Breast epithelium (tissue), 4 donors: ENCODE measurements at regions of chr12 and their contacts with region 1.

Region 1: DNA sequence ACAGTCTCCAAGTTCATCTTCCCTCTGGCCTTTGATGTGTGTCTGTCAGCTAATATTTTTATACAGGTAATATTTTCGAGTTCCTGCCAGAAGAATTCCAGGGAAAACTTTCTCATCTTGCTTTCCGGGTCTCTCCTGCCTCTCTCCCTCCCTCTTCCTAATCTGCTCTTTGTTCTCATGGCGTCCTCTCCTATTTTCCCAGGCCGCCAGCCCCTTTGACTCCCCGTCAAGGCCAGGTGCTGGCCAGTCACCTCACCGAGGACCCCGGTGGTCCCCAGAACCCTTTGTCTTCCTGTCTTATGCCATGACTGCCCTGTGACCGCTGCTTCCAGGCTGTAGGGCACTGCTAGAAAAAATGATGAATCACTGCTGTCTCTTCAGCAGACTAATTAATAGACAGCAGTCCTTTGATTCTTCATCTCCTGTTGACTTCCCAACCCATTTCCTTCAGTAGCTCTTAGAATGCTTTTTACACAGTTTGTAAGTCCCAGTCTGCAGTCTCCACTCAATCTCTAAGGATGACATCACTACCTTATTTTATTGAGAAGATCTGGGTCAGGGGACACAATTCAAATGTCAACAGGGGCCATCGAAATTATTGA is 40.7 kb downstream of the PPFIBP1 start:
- DNase-seq: no peak
- H3K4me3 ChIP-seq: peak overlapping the region in 1 of 3 donors; percentile 16
- H3K27ac ChIP-seq: peak overlapping the region; percentile 66 to 75
- H3K4me1 ChIP-seq: peaks cover 0 to 6% of the 10 kb centered on the region in 2 donors
- H3K27me3 ChIP-seq: no peaks in the 10 kb centered on the region
- CTCF ChIP-seq: no peak
- POLR2A ChIP-seq: no peak

Region 2: GRCh38 chr12:26461776-26462175 is 1102.9 kb before region 1 on chr12:
- intact Hi-C with region 1: loop called (anchors 5 kb)
- DNase-seq: no peak
- H3K4me3 ChIP-seq: no peak overlapping the region
- H3K27ac ChIP-seq: no peak overlapping the region
- H3K4me1 ChIP-seq: no peaks in the 10 kb centered on the region
- H3K27me3 ChIP-seq: no peaks in the 10 kb centered on the region
- CTCF ChIP-seq: no peak
- POLR2A ChIP-seq: no peak

Region 3: GRCh38 chr12:27999521-27999920 is 434.8 kb after region 1 on chr12:
- intact Hi-C with region 1: no loop called
- DNase-seq: no peak
- H3K4me3 ChIP-seq: no peak overlapping the region
- H3K27ac ChIP-seq: no peak overlapping the region
- H3K4me1 ChIP-seq: no peaks in the 10 kb centered on the region
- H3K27me3 ChIP-seq: no peaks in the 10 kb centered on the region
- CTCF ChIP-seq: no peak
- POLR2A ChIP-seq: no peak